ENCODE measurements at regions of chr2 and their contacts with region 1.

Region 1: GRCh38 chr2:85175369-85176299 is 42.4 kb downstream of the TCF7L1 start:
- DNase-seq: peak; percentile 81
- H3K4me3 ChIP-seq: no peak overlapping the region
- H3K27ac ChIP-seq: peak overlapping the region; percentile 36
- H3K4me1 ChIP-seq: peaks cover 52% of the 10 kb centered on the region
- H3K27me3 ChIP-seq: no peaks in the 10 kb centered on the region
- CTCF ChIP-seq: no peak
- POLR2A ChIP-seq: no peak

Region 2: DNA sequence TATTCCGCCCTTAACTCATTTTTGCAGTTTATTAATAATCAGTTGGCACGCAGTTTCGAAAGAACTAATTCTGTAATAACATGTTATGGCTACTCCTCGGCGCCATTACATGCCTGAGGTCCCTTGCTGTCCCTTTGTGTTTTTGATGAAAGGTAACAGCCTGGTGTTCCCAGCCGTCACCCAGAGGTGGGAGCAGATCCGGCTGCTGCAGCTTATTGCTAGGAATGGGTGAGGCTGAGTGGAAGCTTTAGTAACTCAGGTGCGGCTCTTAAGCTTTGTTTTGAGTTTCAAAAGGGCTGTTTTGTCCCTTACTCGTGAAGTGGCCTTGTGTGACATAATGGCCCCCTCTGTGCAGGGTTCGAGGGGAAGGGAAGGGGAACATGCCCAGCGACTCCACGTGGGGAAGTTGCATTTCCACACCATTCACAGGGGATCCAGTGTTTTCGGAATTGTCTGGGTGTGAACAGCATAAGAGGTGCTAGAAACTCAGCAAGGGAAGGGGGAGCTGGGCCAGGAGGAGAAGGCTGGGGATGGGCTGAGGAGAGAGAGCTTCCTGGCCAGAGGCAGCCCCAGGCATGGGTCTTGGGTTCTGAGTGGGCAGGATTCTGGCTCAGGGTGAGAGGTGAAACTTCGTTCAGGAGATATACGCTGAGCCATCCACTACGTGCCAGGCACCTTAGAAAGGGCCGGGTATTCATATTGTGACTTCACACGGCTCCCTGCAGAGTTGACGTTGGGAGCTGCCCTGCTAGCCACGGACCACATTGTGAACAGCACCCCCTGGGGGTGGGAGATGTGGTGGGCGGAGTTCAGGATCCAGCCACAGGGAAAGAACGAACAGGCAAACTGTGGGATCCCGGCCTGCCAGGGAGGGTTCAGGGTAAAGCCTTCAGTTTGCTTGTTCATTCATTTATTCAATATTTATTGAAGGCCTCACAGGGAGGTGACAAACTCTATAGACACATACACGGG is 67.8 kb after region 1 on chr2:
- CTCF ChIA-PET with region 1: interaction called, 4 read pairs
- POLR2A ChIA-PET with region 1: no interaction called
- dilution Hi-C with region 1: no loop called
- intact Hi-C with region 1: loop called (anchors 5 kb)
- DNase-seq: peak; percentile 30
- H3K4me3 ChIP-seq: no peak overlapping the region
- H3K27ac ChIP-seq: no peak overlapping the region
- H3K4me1 ChIP-seq: peaks cover 15% of the 10 kb centered on the region
- H3K27me3 ChIP-seq: no peaks in the 10 kb centered on the region
- CTCF ChIP-seq: peak; percentile 55 to 70
- POLR2A ChIP-seq: no peak